ENCODE measurements at regions of chr4 and their contacts with region 1.

Region 1: DNA sequence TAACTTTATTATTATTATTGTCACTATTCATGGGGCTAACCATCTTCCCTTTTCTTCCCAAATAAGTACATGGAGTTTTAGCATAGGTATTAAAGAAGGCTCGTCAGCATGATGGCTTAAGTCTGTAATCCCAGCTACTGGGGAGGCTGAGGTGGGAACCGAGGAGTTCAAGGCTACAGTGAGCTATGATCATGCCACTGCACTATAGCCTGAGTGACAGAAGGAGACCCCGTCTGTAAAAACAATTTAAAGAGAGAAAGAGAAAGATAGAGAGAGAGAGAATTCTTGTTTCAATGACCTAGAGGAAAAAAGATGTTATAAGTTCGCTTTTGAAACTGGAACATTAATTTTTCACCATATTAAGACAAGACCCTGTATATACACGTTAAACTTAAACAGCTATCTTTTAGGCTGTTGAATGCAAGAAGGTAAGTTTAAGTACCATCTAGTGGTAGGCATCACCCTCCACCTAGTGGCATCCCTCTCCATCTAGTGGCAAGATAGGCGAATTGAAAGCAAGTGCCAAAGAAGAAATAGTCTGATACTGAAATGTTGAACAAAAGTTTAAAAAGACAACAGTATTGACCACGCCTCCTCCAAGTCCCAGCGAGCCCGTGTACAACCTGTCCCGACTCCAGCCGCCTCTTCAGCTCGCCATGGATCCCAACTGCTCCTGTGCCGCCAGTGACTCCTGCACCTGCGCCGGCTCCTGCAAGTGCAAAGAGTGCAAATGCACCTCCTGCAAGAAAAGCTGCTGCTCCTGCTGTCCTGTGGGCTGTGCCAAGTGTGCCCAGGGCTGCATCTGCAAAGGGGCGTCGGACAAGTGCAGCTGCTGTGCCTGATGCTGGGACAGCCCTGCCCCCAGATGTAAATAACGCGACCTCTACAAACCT is 26.0 kb upstream of the YTHDC1 start:
- DNase-seq: peak; percentile 87
- H3K4me3 Mint-ChIP-seq: peak overlapping the region; percentile 67
- H3K27ac Mint-ChIP-seq: no peak overlapping the region
- H3K4me1 Mint-ChIP-seq: peaks cover 24% of the 10 kb centered on the region
- H3K27me3 Mint-ChIP-seq: no peaks in the 10 kb centered on the region
- CTCF ChIP-seq: peak; percentile 89

Region 2: GRCh38 chr4:68175562-68176155 is 200.3 kb before region 1 on chr4:
- CTCF ChIA-PET with region 1: interaction called, 6 read pairs
- POLR2A ChIA-PET with region 1: no interaction called
- intact Hi-C with region 1: loop called (anchors 10 kb)
- DNase-seq: peak; percentile 81
- H3K4me3 Mint-ChIP-seq: no peak overlapping the region
- H3K27ac Mint-ChIP-seq: no peak overlapping the region
- H3K4me1 Mint-ChIP-seq: peaks cover 1% of the 10 kb centered on the region
- H3K27me3 Mint-ChIP-seq: no peaks in the 10 kb centered on the region
- CTCF ChIP-seq: peak; percentile 50

Region 3: GRCh38 chr4:68288393-68288740 is 87.5 kb before region 1 on chr4:
- CTCF ChIA-PET with region 1: interaction called, 15 read pairs
- POLR2A ChIA-PET with region 1: no interaction called
- intact Hi-C with region 1: no loop called
- DNase-seq: no peak
- H3K4me3 Mint-ChIP-seq: no peak overlapping the region
- H3K27ac Mint-ChIP-seq: no peak overlapping the region
- H3K4me1 Mint-ChIP-seq: no peaks in the 10 kb centered on the region
- H3K27me3 Mint-ChIP-seq: no peaks in the 10 kb centered on the region
- CTCF ChIP-seq: no peak

Region 4: DNA sequence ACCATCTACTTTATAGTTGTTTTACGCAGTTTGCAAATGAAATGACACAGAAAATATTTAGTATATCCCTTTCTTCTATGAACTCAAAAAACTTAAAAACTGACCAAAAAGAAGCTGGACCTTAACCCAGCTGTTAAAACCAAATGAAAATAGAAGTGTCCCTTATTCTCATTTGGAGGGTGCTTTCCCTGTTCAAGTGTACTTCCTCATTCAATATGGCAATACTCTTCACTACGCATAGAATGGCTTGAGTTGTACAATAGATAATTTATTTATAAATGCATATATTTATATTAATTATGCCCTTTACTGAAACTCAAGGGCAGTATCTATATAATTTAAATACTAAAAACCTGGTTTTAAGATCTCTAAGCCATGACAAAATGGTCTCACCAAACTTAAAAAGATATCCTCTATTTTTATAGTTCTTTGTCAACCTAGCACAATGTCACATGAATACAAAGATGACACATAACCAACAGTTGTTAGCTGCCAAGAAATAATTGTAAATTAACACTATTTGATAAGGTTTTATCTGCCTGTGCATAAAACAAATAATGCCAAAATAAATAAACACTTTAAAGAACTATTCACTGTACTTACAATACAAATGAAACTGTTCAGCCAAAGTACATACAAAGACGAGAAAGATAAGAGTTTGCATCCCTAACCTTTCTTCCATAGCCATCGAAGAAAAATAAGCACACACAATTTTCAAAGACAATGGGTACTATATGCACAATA is 51.2 kb before region 1 on chr4:
- CTCF ChIA-PET with region 1: interaction called, 25 read pairs
- POLR2A ChIA-PET with region 1: interaction called, 3 read pairs
- intact Hi-C with region 1: loop called (anchors 10 kb)
- DNase-seq: no peak
- H3K4me3 Mint-ChIP-seq: no peak overlapping the region
- H3K27ac Mint-ChIP-seq: no peak overlapping the region
- H3K4me1 Mint-ChIP-seq: no peaks in the 10 kb centered on the region
- H3K27me3 Mint-ChIP-seq: no peaks in the 10 kb centered on the region
- CTCF ChIP-seq: no peak

Region 5: GRCh38 chr4:68349649-68350360 is 26.1 kb before region 1 on chr4 and contains the start of gene YTHDC1:
- CTCF ChIA-PET with region 1: interaction called, 45 read pairs
- POLR2A ChIA-PET with region 1: interaction called, 134 read pairs
- intact Hi-C with region 1: loop called (anchors 2 kb)
- DNase-seq: peak; percentile 96
- H3K4me3 Mint-ChIP-seq: peak within 1 kb of the TSS; percentile 95
- H3K27ac Mint-ChIP-seq: peak within 1 kb of the TSS; percentile 93
- H3K4me1 Mint-ChIP-seq: peaks cover 12% of the 10 kb centered on the region
- H3K27me3 Mint-ChIP-seq: no peaks in the 10 kb centered on the region
- CTCF ChIP-seq: no peak
- total RNA-seq, gene YTHDC1: 117 and 123 TPM in 2 replicates

Region 6: DNA sequence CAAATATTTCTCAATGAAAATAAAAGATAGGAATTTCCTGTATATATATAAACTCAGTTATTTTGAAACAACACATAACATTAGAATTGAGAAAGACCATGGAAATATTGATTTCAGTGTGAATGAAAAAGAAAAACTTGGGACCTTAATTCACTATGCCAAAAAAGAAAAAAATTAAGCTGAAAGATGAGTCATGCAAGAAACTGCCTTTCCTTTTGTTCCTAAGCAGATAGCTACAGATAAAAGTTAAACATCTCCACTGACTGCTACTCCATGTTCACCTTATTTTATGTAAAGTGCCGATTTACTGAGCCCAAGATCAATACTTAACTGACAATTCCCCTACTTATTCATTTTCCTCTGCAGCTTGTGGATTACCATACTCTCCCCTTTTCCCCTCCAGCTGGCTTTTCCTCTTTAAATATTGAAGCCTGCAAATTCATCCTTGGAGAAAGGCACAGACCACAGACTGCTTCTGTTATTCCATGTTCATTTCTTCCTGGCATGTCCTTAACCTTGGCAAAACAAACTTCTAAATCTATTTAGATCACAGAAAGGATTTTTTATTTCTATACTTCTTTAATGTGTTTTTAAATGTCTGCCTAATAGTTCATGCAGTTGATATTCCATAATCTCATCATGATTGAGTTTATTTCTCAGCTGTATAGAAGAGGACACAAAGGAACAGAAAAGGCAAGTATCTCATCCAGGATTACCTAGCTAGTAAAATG is 14.5 kb after region 1 on chr4:
- CTCF ChIA-PET with region 1: interaction called, 23 read pairs
- POLR2A ChIA-PET with region 1: interaction called, 3 read pairs
- intact Hi-C with region 1: no loop called
- DNase-seq: no peak
- H3K4me3 Mint-ChIP-seq: no peak overlapping the region
- H3K27ac Mint-ChIP-seq: no peak overlapping the region
- H3K4me1 Mint-ChIP-seq: peaks cover 8% of the 10 kb centered on the region
- H3K27me3 Mint-ChIP-seq: no peaks in the 10 kb centered on the region
- CTCF ChIP-seq: no peak

Region 7: DNA sequence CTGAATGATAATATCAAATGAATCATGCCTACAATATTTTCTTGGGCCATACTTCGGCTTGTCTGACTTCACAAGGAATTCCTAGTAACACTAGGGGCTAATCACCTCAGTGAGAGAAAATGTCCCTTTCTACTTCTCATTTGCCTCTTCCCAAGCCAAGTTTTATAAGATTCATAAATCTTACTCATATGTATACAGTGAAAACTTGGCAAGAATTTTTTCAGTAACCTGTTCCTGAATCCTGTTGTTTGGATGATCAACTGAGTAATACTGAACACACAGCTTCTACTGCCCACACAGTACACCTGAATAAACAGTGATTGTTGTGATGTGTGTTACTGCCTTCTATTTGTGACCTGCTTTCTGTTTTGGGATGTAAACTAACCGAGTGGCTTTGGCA is 87.9 kb after region 1 on chr4:
- CTCF ChIA-PET with region 1: no interaction called
- POLR2A ChIA-PET with region 1: no interaction called
- intact Hi-C with region 1: no loop called
- DNase-seq: peak; percentile 39
- H3K4me3 Mint-ChIP-seq: no peak overlapping the region
- H3K27ac Mint-ChIP-seq: peak overlapping the region; percentile 52
- H3K4me1 Mint-ChIP-seq: peaks cover 29% of the 10 kb centered on the region
- H3K27me3 Mint-ChIP-seq: no peaks in the 10 kb centered on the region
- CTCF ChIP-seq: no peak